IMR-90 (cell line): ENCODE measurements at regions of chr3 and their contacts with region 1.

Region 1: DNA sequence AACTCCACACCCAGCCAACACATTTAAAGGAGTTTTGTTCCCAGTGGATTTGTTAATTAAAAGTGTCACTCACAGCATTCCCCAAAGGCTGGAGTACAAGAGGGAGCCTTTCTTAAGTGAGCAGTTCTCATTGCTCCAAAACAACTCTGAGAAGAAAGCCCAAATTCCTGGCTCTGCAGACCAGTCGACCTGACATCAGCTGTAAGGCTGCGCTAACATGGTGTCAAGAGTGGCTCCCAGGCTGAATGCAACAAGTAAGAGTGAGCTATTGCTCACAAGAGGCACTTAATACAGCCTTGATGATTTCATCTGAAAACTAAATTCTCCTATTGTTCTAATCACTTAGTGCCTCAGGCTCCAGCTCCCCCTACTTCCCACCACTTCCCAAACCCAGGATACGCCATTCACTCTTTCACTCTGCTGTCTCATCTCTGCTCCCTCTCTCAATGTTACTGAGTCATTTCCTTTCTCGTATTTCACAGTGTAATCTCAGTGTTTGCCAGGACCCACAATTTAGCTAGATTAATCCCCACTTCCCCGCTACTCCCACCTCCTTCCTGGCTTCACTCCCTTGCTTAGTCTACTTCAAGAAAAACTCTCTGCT is 81.8 kb downstream of the WWTR1 start:
- DNase-seq: peak; percentile 99
- ATAC-seq: peak; percentile 83
- H3K4me3 ChIP-seq: no peak overlapping the region
- H3K27ac ChIP-seq: peak overlapping the region; percentile 92
- H3K4me1 ChIP-seq: peaks cover 31% of the 10 kb centered on the region
- H3K27me3 ChIP-seq: no peaks in the 10 kb centered on the region
- CTCF ChIP-seq: no peak
- POLR2A ChIP-seq: peak; percentile 62; the same call in 1 of the 2 replicates
- RAD21 ChIP-seq: peak; percentile 43

Region 2: DNA sequence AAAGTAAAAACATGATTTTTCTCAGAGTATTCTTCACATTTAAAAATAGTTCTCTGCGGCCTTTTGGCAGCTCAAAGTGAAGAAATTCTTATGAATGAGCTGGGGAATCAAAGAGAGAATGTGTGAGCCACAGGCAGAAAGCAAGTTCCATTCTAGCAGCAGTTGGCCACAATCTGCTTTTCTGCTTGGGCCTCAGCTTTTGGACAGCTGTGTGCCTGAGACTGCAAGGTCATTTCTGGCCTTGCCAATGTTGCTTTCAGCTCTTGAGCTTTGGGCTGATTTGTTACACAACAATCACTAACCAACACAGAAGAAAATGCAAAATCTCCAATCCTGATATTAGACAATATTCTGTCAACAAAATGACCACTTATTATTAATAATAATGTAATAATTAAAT is 115.9 kb before region 1 on chr3:
- CTCF ChIA-PET with region 1: no interaction called
- POLR2A ChIA-PET with region 1: no interaction called
- dilution Hi-C with region 1: no loop called
- in situ Hi-C with region 1: no loop called
- intact Hi-C with region 1: no loop called
- DNase-seq: no peak
- ATAC-seq: no peak
- H3K4me3 ChIP-seq: no peak overlapping the region
- H3K27ac ChIP-seq: no peak overlapping the region
- H3K4me1 ChIP-seq: peaks cover 11% of the 10 kb centered on the region
- H3K27me3 ChIP-seq: no peaks in the 10 kb centered on the region
- CTCF ChIP-seq: no peak
- POLR2A ChIP-seq: no peak
- RAD21 ChIP-seq: no peak

Region 3: GRCh38 chr3:149536429-149536828 is 39.6 kb before region 1 on chr3:
- CTCF ChIA-PET with region 1: interaction called, 8 read pairs
- POLR2A ChIA-PET with region 1: no interaction called
- dilution Hi-C with region 1: no loop called
- in situ Hi-C with region 1: no loop called
- intact Hi-C with region 1: loop called (anchors 5 kb)
- DNase-seq: no peak
- ATAC-seq: no peak
- H3K4me3 ChIP-seq: no peak overlapping the region
- H3K27ac ChIP-seq: peak overlapping the region; percentile 27; the same call in 1 of the 2 replicates
- H3K4me1 ChIP-seq: peaks cover 31% of the 10 kb centered on the region
- H3K27me3 ChIP-seq: no peaks in the 10 kb centered on the region
- CTCF ChIP-seq: no peak
- POLR2A ChIP-seq: no peak
- RAD21 ChIP-seq: no peak

Region 4: GRCh38 chr3:149638228-149639092 is 62.4 kb after region 1 on chr3:
- CTCF ChIA-PET with region 1: interaction called, 4 read pairs
- POLR2A ChIA-PET with region 1: no interaction called
- dilution Hi-C with region 1: no loop called
- in situ Hi-C with region 1: no loop called
- intact Hi-C with region 1: loop called (anchors 5 kb)
- DNase-seq: peak; percentile 88
- ATAC-seq: peak; percentile 74
- H3K4me3 ChIP-seq: peak overlapping the region; percentile 35
- H3K27ac ChIP-seq: peak overlapping the region; percentile 95
- H3K4me1 ChIP-seq: peaks cover 16% of the 10 kb centered on the region
- H3K27me3 ChIP-seq: no peaks in the 10 kb centered on the region
- CTCF ChIP-seq: no peak
- POLR2A ChIP-seq: peak; percentile 59; the same call in 1 of the 2 replicates
- RAD21 ChIP-seq: peak; percentile 3; the same call in 1 of the 2 replicates